Gastrocnemius medialis (tissue), 4 donors: ENCODE measurements at regions of chr6 and their contacts with region 1.

Region 1: GRCh38 chr6:142692942-142693341 is 252.0 kb downstream of the HIVEP2 start:
- DNase-seq: peak; percentile 34 to 52
- ATAC-seq: peak; percentile 63 to 79
- H3K4me3 ChIP-seq: no peak overlapping the region
- H3K27ac ChIP-seq: peak overlapping the region in 2 of 4 donors; percentile 3 to 15
- H3K4me1 ChIP-seq: peaks cover 11 to 12% of the 10 kb centered on the region in 2 donors
- H3K27me3 ChIP-seq: no peaks in the 10 kb centered on the region
- CTCF ChIP-seq: peak; percentile 91 to 95 (median 93)
- POLR2A ChIP-seq: no peak

Region 2: DNA sequence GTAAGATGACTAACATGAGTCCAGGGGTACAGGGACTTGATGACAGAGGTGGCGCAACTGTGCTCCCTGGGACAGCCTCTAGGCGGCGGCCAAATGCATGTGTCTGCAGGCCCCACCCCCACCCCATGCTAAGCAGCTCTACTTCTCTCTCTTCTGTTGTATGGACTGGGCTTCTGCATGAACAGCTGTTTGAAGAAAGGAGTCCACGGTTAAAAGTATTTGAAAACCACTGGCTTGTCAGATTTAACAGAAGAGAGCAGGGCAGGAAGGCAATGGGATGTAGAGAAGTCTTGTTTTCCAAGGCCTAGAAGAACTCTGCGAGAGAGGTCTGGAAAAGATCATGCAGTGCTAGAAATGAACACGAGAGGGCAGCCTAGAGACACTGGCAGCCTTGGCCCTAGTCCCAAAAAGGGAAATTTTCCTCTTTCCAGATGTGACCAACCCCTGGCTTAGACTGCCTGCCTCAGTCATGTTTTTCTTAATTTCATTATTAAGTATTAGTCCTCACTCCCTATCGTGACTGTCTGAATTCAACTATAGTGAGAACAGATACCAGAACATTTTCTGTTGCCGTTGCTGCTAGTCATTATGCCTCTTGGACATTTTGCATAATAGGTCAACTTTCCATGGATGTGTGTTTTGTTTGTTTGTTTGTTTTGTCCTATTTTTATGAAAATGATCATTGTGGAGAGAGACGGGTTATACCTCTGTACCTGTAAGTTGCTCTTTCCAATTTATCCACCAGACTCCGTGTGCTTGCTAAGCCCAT is 126.1 kb before region 1 on chr6:
- in situ Hi-C with region 1: no loop called
- intact Hi-C with region 1: no loop called
- DNase-seq: no peak
- ATAC-seq: no peak
- H3K4me3 ChIP-seq: no peak overlapping the region
- H3K27ac ChIP-seq: no peak overlapping the region
- H3K4me1 ChIP-seq: no peaks in the 10 kb centered on the region
- H3K27me3 ChIP-seq: no peaks in the 10 kb centered on the region
- CTCF ChIP-seq: peak; percentile 4 to 71 (median 45)
- POLR2A ChIP-seq: no peak

Region 3: GRCh38 chr6:142746524-142746923 is 53.6 kb after region 1 on chr6:
- in situ Hi-C with region 1: no loop called
- intact Hi-C with region 1: loop called (anchors 2 kb)
- DNase-seq: no peak
- ATAC-seq: no peak
- H3K4me3 ChIP-seq: no peak overlapping the region
- H3K27ac ChIP-seq: no peak overlapping the region
- H3K4me1 ChIP-seq: no peaks in the 10 kb centered on the region
- H3K27me3 ChIP-seq: no peaks in the 10 kb centered on the region
- CTCF ChIP-seq: peak in 4 of 5 experiments; percentile 15 to 53 (median 39)
- POLR2A ChIP-seq: no peak

Region 4: GRCh38 chr6:142946181-142946923 is 253.4 kb after region 1 on chr6:
- in situ Hi-C with region 1: loop called in 2 of 4 experiments (anchors 10 kb)
- intact Hi-C with region 1: loop called (anchors 2 kb)
- DNase-seq: peak; percentile 99
- ATAC-seq: peak; percentile 66 to 68
- H3K4me3 ChIP-seq: peak overlapping the region; percentile 82 to 98 (median 88)
- H3K27ac ChIP-seq: peak overlapping the region; percentile 94 to 100 (median 98)
- H3K4me1 ChIP-seq: peaks cover 28 to 33% of the 10 kb centered on the region in 2 donors
- H3K27me3 ChIP-seq: no peaks in the 10 kb centered on the region
- CTCF ChIP-seq: no peak
- POLR2A ChIP-seq: peak; percentile 91 to 96

Region 5: GRCh38 chr6:143026696-143027449 is 333.9 kb after region 1 on chr6:
- in situ Hi-C with region 1: loop called (anchors 5 to 10 kb)
- intact Hi-C with region 1: loop called (anchors 1 kb)
- DNase-seq: peak in 1 of 2 donors; percentile 29
- ATAC-seq: peak; percentile 63 to 75
- H3K4me3 ChIP-seq: no peak overlapping the region
- H3K27ac ChIP-seq: no peak overlapping the region
- H3K4me1 ChIP-seq: no peaks in the 10 kb centered on the region
- H3K27me3 ChIP-seq: no peaks in the 10 kb centered on the region
- CTCF ChIP-seq: peak; percentile 60 to 74 (median 64)
- POLR2A ChIP-seq: no peak

Region 6: DNA sequence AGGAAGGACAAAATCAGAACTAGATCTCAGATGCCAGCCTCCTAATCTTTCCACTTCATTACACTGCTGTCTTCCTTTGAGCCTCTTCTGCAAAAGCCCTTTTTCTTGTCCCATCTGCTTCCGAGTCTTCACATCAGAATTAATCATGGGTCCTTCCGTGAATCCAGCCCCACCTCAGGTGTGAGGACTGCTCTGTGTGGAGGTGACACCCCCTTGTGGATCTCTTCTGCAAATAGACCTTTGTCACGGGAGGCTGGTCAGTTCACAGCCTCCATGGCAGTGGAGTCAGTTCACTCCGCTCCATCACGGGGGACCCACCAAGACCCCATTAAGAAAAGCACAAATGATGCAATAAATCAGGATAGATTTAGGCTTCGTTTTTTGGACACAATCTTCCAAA is 586.4 kb after region 1 on chr6:
- in situ Hi-C with region 1: loop called in 2 of 4 experiments (anchors 25 kb)
- intact Hi-C with region 1: loop called (anchors 1 kb)
- DNase-seq: no peak
- ATAC-seq: peak in 1 of 2 donors; percentile 53
- H3K4me3 ChIP-seq: no peak overlapping the region
- H3K27ac ChIP-seq: no peak overlapping the region
- H3K4me1 ChIP-seq: no peaks in the 10 kb centered on the region
- H3K27me3 ChIP-seq: no peaks in the 10 kb centered on the region
- CTCF ChIP-seq: peak in 2 of 5 experiments; percentile 21 to 43
- POLR2A ChIP-seq: no peak

Region 7: GRCh38 chr6:143427109-143427817 is 734.3 kb after region 1 on chr6:
- in situ Hi-C with region 1: loop called in 3 of 4 experiments (anchors 5 to 25 kb)
- intact Hi-C with region 1: loop called (anchors 5 kb)
- DNase-seq: peak; percentile 10 to 31
- ATAC-seq: peak; percentile 30 to 56
- H3K4me3 ChIP-seq: no peak overlapping the region
- H3K27ac ChIP-seq: no peak overlapping the region
- H3K4me1 ChIP-seq: no peaks in the 10 kb centered on the region
- H3K27me3 ChIP-seq: no peaks in the 10 kb centered on the region
- CTCF ChIP-seq: peak; percentile 43 to 86 (median 76)
- POLR2A ChIP-seq: no peak